Posterior cingulate gyrus (tissue), 11 donors: ENCODE measurements at regions of chr19 and their contacts with region 1.

Region 1: DNA sequence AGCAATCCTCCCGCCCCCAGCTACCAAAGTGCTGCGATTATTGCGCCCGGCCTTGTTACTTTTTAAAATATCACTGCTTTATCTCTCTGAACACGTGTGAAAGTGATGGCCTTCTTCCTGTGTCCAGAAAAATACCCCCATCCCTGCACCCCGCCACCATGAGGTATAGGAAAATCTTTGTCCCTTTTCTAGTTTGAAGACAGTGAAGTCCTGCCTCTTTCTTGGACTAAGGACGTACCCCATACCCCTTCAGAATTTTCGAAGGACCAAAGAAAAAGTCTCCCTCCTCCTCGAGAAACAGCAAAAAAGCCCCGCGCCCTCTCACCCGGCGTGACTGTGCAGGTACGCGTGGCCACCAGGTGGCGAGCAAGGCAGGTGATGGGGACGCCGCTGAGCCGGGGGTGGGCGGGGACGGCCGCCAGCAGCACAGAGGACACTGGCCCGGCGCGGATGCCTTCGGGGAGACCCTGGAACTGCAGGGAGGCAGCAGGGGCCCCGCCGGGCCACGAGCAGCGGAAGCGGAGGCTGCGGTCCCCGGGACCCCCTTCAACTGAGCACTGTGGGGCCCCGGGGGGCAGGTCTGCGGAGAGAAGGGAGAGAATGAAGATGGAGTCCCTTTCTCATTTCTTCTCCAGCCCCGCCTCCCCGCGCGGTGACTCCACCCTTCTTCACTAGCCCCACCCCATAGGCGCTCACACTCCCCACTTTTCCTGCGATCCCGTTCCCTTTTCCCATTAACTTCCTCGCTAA is 3.2 kb downstream of the VSIG10L start:
- DNase-seq: peak; percentile 39 to 95 (median 72)

Region 2: GRCh38 chr19:51367565-51368365 is 29.0 kb after region 1 on chr19:
- intact Hi-C with region 1: loop called (anchors 2 kb)
- DNase-seq: peak; percentile 96 to 100 (median 98)

Region 3: DNA sequence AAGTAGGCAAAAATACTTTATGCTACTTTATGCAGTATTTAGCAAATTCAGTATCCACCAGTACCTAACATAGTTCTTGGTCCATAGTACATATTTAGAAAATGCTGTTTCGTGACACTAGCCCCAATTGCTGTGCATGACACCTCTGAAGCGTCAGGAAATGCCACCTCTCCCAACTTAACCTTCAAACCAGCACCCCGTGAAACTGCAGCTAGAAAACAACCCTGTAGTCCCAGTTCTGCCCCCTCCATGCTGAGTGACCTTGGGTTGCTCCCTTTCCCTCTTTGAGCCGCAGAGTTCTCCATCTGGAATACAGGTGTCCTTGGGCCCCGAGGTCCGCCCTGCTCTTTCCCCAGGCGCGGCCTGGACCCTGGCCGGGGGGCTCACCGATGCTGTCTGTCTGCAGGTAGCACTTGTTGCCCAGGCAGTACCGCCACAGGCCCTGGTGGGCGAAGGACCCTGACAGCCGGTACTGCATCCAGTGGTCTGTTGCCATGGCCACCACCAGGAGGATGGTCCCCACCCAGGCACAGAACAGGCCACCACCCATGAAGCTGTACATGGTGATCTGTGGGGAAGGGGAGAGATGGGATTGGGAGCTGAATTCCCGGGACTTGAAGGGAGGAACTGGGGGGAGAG is 48.3 kb after region 1 on chr19:
- intact Hi-C with region 1: no loop called
- DNase-seq: peak in 2 of 10 donors; percentile 56 to 76

Region 4: GRCh38 chr19:51422053-51422448 is 83.3 kb after region 1 on chr19:
- intact Hi-C with region 1: no loop called
- DNase-seq: peak in 9 of 10 donors; percentile 49 to 96 (median 80)

Region 5: GRCh38 chr19:51441410-51442390 is 103.0 kb after region 1 on chr19:
- intact Hi-C with region 1: loop called (anchors 1 kb)
- DNase-seq: no peak